ENCODE measurements at regions of chr1 and their contacts with region 1.

Region 1: DNA sequence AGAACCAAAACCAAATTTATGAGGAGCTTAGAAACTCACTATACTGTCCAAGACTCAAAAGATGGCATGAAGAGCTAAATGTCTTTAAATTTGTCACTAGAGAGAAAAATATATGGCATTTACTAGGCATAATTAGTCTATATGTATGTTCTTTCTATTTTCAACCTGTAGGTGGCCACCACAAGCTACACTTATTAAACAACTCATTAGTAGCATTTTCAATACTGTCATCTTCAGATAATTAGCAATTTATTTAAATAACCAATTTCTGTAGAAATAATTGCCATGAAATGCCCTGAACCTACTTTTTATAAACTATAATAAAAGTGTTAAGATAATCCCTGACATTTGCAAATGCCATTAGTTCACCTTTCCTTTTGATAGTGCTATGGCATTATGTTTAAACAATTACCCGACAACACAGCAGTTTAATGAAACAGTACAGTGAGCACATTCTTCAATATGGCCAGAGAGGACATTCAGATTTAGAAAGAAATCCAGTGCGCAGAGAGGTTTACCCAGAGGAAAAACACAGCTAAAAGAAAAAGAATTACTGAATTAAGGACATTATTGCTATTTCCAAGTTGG is 522.5 kb downstream of the PTBP2 start:
- DNase-seq: no peak
- H3K4me3 ChIP-seq: no peak overlapping the region
- H3K27ac ChIP-seq: no peak overlapping the region
- H3K4me1 ChIP-seq: no peaks in the 10 kb centered on the region
- H3K27me3 ChIP-seq: no peaks in the 10 kb centered on the region
- CTCF ChIP-seq: peak in 2 of 3 experiments; percentile 4 to 26; a peak in 2 of 4 replicates
- EP300 ChIP-seq: no peak
- POLR2A ChIP-seq: no peak
- RAD21 ChIP-seq: peak in 1 of 2 experiments; percentile 55; a peak in 3 of 4 replicates

Region 2: DNA sequence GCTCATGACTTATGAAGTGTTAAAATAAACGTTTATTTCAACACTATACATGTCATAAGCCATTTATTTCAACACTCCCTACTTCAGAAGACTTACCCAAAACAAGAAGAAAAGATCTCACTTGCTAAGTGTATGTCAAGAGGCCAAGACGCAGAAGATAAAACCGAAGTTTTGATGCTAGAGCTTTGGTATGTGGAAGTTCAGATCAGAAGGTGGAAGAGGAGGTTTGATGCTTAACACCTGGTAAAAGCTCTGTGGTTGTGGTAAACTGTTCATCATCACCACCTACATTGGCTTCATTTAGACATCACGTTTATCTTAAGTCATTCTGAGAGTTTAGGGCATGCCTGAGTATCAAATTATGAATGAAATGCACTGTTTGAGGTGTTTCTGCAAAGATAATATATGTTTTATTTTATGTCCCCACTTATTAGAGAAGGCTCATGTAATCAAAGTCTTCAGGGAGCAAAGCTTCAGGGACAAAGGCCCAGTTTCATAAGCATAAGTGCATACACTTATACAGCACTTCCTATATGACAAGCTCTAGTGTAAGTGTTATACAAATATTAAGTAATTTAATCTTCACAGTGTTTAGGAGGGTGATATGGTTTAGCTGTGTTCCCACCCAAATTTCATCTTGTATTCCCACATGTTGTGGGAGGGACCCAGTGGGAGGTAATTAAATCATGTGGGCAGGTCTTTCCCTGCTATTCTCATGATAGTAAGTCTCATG is 10.8 kb after region 1 on chr1:
- CTCF ChIA-PET with region 1: interaction called, 13 read pairs
- POLR2A ChIA-PET with region 1: no interaction called
- DNase-seq: no peak
- H3K4me3 ChIP-seq: no peak overlapping the region
- H3K27ac ChIP-seq: no peak overlapping the region
- H3K4me1 ChIP-seq: no peaks in the 10 kb centered on the region
- H3K27me3 ChIP-seq: no peaks in the 10 kb centered on the region
- CTCF ChIP-seq: no peak
- EP300 ChIP-seq: no peak
- POLR2A ChIP-seq: no peak
- RAD21 ChIP-seq: no peak